MCF 10A (cell line): ENCODE measurements at regions of chr7 and their contacts with region 1.

Region 1: GRCh38 chr7:66844552-66845378 is 76.3 kb upstream of the TMEM248 start:
- DNase-seq: peak; percentile 97
- H3K4me3 Mint-ChIP-seq: peak overlapping the region; percentile 89
- H3K27ac Mint-ChIP-seq: peak overlapping the region; percentile 99
- H3K4me1 Mint-ChIP-seq: peaks cover 12% of the 10 kb centered on the region
- H3K27me3 Mint-ChIP-seq: no peaks in the 10 kb centered on the region
- CTCF ChIP-seq: peak; percentile 15

Region 2: DNA sequence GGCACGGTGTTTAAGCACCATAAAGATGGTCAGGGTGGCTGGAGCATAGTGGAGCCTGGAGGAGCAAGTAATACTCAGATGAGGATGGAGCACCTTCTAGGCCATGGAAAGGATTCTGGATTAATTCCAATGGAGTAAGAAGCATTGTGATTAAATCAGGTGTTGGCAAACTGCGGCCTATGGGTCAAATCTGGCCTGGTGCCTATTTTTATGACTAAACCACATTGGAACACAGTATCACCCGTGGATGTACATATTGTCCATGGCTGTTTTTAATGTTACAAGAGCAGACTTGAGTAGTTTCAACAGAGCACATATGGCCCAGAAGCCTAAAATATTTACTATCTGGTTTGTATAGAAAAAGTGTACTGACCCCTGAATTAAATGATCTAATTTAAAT is 26.3 kb after region 1 on chr7:
- CTCF ChIA-PET with region 1: no interaction called
- POLR2A ChIA-PET with region 1: interaction called, 16 read pairs
- intact Hi-C with region 1: no loop called
- DNase-seq: peak; percentile 80
- H3K4me3 Mint-ChIP-seq: no peak overlapping the region
- H3K27ac Mint-ChIP-seq: peak overlapping the region; percentile 44
- H3K4me1 Mint-ChIP-seq: peaks cover 22% of the 10 kb centered on the region
- H3K27me3 Mint-ChIP-seq: no peaks in the 10 kb centered on the region
- CTCF ChIP-seq: no peak

Region 3: GRCh38 chr7:66920769-66921395 is 76.1 kb after region 1 on chr7 and contains the start of gene TMEM248:
- CTCF ChIA-PET with region 1: interaction called, 3 read pairs
- POLR2A ChIA-PET with region 1: interaction called, 42 read pairs
- intact Hi-C with region 1: no loop called
- DNase-seq: peak; percentile 82
- H3K4me3 Mint-ChIP-seq: peak within 1 kb of the TSS; percentile 85
- H3K27ac Mint-ChIP-seq: peak within 1 kb of the TSS; percentile 66
- H3K4me1 Mint-ChIP-seq: peaks cover 8% of the 10 kb centered on the region
- H3K27me3 Mint-ChIP-seq: no peaks in the 10 kb centered on the region
- CTCF ChIP-seq: no peak
- total RNA-seq, gene TMEM248: 75.7 and 80.0 TPM in 2 replicates

Region 4: GRCh38 chr7:66952343-66953043 is 107.7 kb after region 1 on chr7:
- CTCF ChIA-PET with region 1: interaction called, 4 read pairs
- POLR2A ChIA-PET with region 1: interaction called, 5 read pairs
- intact Hi-C with region 1: loop called (anchors 10 kb)
- DNase-seq: peak; percentile 70
- H3K4me3 Mint-ChIP-seq: no peak overlapping the region
- H3K27ac Mint-ChIP-seq: peak overlapping the region; percentile 40
- H3K4me1 Mint-ChIP-seq: peaks cover 30% of the 10 kb centered on the region
- H3K27me3 Mint-ChIP-seq: no peaks in the 10 kb centered on the region
- CTCF ChIP-seq: no peak

Region 5: DNA sequence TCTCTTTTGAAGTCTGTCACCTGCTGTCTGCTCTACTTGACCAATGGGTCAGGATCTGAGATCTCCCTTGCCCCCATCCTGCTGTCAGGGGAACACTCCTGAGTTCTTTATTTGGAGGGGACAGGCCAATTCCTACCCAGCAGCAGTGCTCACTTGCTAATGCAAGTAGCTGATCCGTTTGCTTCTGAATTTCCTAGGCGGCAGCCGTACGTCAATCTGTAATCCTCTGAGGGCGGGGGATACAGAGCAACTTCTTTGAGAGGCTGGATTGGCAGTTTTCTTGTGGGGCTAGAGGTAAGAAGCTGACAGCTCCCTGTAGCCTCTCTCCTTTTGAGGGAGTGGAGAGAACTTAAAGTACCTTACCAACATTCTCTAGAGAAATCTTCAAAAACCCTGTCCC is 188.5 kb after region 1 on chr7:
- CTCF ChIA-PET with region 1: no interaction called
- POLR2A ChIA-PET with region 1: no interaction called
- intact Hi-C with region 1: no loop called
- DNase-seq: no peak
- H3K4me3 Mint-ChIP-seq: no peak overlapping the region
- H3K27ac Mint-ChIP-seq: no peak overlapping the region
- H3K4me1 Mint-ChIP-seq: no peaks in the 10 kb centered on the region
- H3K27me3 Mint-ChIP-seq: no peaks in the 10 kb centered on the region
- CTCF ChIP-seq: no peak